A549 (cell line): ENCODE measurements at regions of chr10 and their contacts with region 1.

Region 1: DNA sequence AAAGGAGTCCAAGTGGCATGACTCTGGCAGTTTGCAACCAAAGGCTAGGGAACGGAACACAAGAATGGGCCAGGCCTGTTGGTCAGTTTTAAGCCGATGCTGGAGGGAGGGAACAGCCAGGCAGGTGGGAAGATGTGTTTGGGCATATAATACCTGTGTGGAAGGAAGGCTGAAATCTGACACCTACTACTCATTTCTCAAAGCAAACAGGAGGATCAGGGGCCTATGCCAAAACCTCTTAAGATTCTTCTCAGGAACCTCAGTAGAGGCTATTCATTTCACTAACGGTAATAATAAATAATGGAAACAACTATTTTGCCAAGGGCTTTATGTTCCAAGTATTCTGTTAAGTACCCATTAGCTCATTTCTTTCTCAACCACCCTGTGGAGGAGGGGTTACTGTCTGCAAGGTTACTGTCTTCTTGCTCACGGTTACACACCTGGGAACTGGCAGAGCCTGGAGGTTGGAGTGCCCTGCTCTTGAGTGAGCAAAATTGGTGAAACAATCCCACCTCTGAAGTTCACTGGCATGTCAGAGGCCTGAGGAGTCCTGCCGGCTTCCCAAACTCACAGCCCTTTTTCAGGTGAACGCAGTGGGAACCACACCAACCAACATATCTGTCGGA is 35.5 kb downstream of the GOT1 start:
- DNase-seq: no peak
- ATAC-seq: no peak
- H3K4me3 ChIP-seq: no peak overlapping the region
- H3K27ac ChIP-seq: no peak overlapping the region
- H3K4me1 ChIP-seq: peaks cover 5% of the 10 kb centered on the region; the same call in 1 of the 3 replicates
- CTCF ChIP-seq: no peak
- EP300 ChIP-seq: no peak
- POLR2A ChIP-seq: no peak
- RAD21 ChIP-seq: no peak

Region 2: GRCh38 chr10:99170116-99170675 is 224.7 kb before region 1 on chr10:
- CTCF ChIA-PET with region 1: no interaction called
- POLR2A ChIA-PET with region 1: no interaction called
- DNase-seq: no peak
- ATAC-seq: no peak
- H3K4me3 ChIP-seq: no peak overlapping the region
- H3K27ac ChIP-seq: no peak overlapping the region
- H3K4me1 ChIP-seq: no peaks in the 10 kb centered on the region
- CTCF ChIP-seq: no peak
- EP300 ChIP-seq: no peak
- POLR2A ChIP-seq: no peak
- RAD21 ChIP-seq: no peak

Region 3: GRCh38 chr10:99303899-99304861 is 90.7 kb before region 1 on chr10:
- CTCF ChIA-PET with region 1: no interaction called
- POLR2A ChIA-PET with region 1: no interaction called
- DNase-seq: peak in 1 of 2 experiments; percentile 36
- ATAC-seq: peak in 1 of 2 experiments; percentile 49; a peak in 2 of 6 replicates
- H3K4me3 ChIP-seq: no peak overlapping the region
- H3K27ac ChIP-seq: no peak overlapping the region
- H3K4me1 ChIP-seq: peaks cover 16% of the 10 kb centered on the region; the same call in 2 of the 3 replicates
- CTCF ChIP-seq: no peak
- EP300 ChIP-seq: no peak
- POLR2A ChIP-seq: no peak
- RAD21 ChIP-seq: no peak

Region 4: GRCh38 chr10:99372546-99373271 is 22.2 kb before region 1 on chr10:
- CTCF ChIA-PET with region 1: interaction called, 16 read pairs
- POLR2A ChIA-PET with region 1: no interaction called
- DNase-seq: no peak
- ATAC-seq: no peak
- H3K4me3 ChIP-seq: no peak overlapping the region
- H3K27ac ChIP-seq: no peak overlapping the region
- H3K4me1 ChIP-seq: peaks cover 22% of the 10 kb centered on the region
- CTCF ChIP-seq: no peak
- EP300 ChIP-seq: no peak
- POLR2A ChIP-seq: no peak
- RAD21 ChIP-seq: no peak

Region 5: GRCh38 chr10:99382181-99382580 is 12.7 kb before region 1 on chr10:
- CTCF ChIA-PET with region 1: interaction called, 16 read pairs
- POLR2A ChIA-PET with region 1: no interaction called
- DNase-seq: no peak
- ATAC-seq: no peak
- H3K4me3 ChIP-seq: no peak overlapping the region
- H3K27ac ChIP-seq: no peak overlapping the region
- H3K4me1 ChIP-seq: no peaks in the 10 kb centered on the region
- CTCF ChIP-seq: no peak
- EP300 ChIP-seq: no peak
- POLR2A ChIP-seq: no peak
- RAD21 ChIP-seq: no peak